A673 (cell line): ENCODE measurements at regions of chr21 and their contacts with region 1.

Region 1: GRCh38 chr21:36141513-36141925 is 6.6 kb downstream of the CBR3 start:
- DNase-seq: peak; percentile 82
- H3K4me3 ChIP-seq: no peak overlapping the region
- H3K27ac ChIP-seq: no peak overlapping the region
- H3K4me1 ChIP-seq: peaks cover 6% of the 10 kb centered on the region
- H3K27me3 ChIP-seq: no peaks in the 10 kb centered on the region
- CTCF ChIP-seq: peak; percentile 91

Region 2: GRCh38 chr21:35649186-35649585 is 492.3 kb before region 1 on chr21:
- CTCF ChIA-PET with region 1: no interaction called
- POLR2A ChIA-PET with region 1: no interaction called
- intact Hi-C with region 1: no loop called
- DNase-seq: no peak
- H3K4me3 ChIP-seq: no peak overlapping the region
- H3K27ac ChIP-seq: no peak overlapping the region
- H3K4me1 ChIP-seq: no peaks in the 10 kb centered on the region
- H3K27me3 ChIP-seq: peaks cover 27% of the 10 kb centered on the region
- CTCF ChIP-seq: no peak

Region 3: DNA sequence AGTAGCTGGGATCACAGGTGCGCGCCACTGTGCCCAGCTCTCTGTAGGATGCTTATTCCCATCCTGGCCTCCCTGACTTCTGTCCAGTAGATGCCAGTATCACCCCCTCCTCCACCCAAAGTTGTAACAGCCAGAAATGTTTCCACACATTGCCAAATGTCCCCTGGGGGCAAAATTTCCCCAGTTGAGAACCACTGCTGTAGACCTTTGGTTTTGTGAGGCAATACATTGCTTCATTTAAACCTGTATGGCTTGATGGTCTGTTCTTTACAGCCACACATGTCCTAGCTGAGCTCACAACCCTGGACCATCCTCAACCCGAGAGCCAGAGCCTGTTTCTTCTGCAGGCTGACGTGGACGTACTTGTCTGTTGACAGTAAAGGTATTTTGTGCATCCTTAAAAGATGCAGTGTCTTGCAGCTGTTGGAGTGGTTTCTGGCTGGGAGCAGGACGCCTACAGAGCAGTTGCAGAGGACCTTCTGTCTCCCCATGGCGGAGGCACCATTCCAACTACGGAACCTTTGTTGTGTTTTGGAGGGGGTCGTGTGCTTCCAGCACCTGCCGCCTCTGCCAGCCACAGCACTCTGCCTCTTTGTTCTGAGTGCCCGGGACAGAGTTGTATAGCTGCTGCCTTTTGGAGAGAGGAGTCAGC is 41.8 kb after region 1 on chr21:
- CTCF ChIA-PET with region 1: interaction called, 11 read pairs
- POLR2A ChIA-PET with region 1: interaction called, 5 read pairs
- intact Hi-C with region 1: no loop called
- DNase-seq: no peak
- H3K4me3 ChIP-seq: no peak overlapping the region
- H3K27ac ChIP-seq: no peak overlapping the region
- H3K4me1 ChIP-seq: no peaks in the 10 kb centered on the region
- H3K27me3 ChIP-seq: no peaks in the 10 kb centered on the region
- CTCF ChIP-seq: no peak

Region 4: GRCh38 chr21:36235058-36235582 is 93.6 kb after region 1 on chr21:
- CTCF ChIA-PET with region 1: no interaction called
- POLR2A ChIA-PET with region 1: interaction called, 14 read pairs
- intact Hi-C with region 1: no loop called
- DNase-seq: no peak
- H3K4me3 ChIP-seq: no peak overlapping the region
- H3K27ac ChIP-seq: no peak overlapping the region
- H3K4me1 ChIP-seq: no peaks in the 10 kb centered on the region
- H3K27me3 ChIP-seq: no peaks in the 10 kb centered on the region
- CTCF ChIP-seq: no peak

Region 5: GRCh38 chr21:36385233-36386030 is 243.9 kb after region 1 on chr21 and contains the start of gene CHAF1B:
- CTCF ChIA-PET with region 1: no interaction called
- POLR2A ChIA-PET with region 1: interaction called, 10 read pairs
- intact Hi-C with region 1: loop called (anchors 2 kb)
- DNase-seq: peak; percentile 81
- H3K4me3 ChIP-seq: peak within 1 kb of the TSS; percentile 70
- H3K27ac ChIP-seq: peak within 1 kb of the TSS; percentile 80
- H3K4me1 ChIP-seq: peaks cover 24% of the 10 kb centered on the region
- H3K27me3 ChIP-seq: no peaks in the 10 kb centered on the region
- CTCF ChIP-seq: no peak
- total RNA-seq, gene CHAF1B: 52.7 and 53.4 TPM in 2 replicates

Region 6: DNA sequence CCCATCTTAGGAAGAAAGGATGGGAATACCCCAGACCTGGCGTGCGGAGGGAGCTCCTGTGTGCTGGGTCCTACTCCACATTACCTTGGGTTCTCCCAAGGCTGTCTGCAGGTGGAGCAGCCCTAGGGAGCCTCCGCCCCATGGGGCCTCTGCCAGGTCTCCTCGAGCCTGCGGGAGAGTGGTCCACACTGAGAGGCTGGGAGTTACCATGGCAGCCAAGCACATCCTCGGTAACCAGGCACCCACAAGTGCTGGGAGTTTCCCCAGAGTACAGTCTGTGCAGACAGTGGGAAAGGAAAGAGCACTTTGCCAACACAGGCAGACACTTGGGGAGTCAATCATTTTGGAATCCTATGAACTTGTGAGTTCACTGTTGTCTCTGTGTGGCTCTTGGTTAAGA is 1474.4 kb after region 1 on chr21:
- CTCF ChIA-PET with region 1: no interaction called
- POLR2A ChIA-PET with region 1: interaction called, 10 read pairs
- intact Hi-C with region 1: no loop called
- DNase-seq: no peak
- H3K4me3 ChIP-seq: no peak overlapping the region
- H3K27ac ChIP-seq: no peak overlapping the region
- H3K4me1 ChIP-seq: no peaks in the 10 kb centered on the region
- H3K27me3 ChIP-seq: no peaks in the 10 kb centered on the region
- CTCF ChIP-seq: no peak